Endothelial cell of umbilical vein (primary cell): ENCODE measurements at regions of chr22 and their contacts with region 1.

Region 1: DNA sequence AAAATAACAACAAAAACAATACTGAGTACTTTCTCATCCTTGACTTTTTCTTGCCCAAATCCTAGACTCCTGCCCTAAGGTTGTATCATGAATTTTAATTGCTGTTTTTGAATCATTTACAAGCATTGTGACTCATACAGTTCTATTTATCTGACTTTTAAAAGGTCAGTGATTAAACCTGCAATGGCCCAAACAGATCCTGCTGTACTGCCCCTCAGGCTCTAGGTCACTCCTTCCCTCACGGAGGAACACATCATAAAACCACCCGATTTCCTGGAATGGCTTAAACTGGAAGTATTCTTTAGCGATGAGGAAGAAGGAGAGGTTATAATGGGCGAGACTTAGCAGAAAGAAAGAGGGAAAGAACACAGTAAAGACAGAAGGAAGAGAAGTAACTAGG is 12.3 kb downstream of the ARFGAP3 start:
- DNase-seq: peak; percentile 61
- H3K4me3 ChIP-seq: no peak overlapping the region
- H3K27ac ChIP-seq: no peak overlapping the region
- H3K4me1 ChIP-seq: peaks cover 14% of the 10 kb centered on the region
- H3K27me3 ChIP-seq: no peaks in the 10 kb centered on the region
- CTCF ChIP-seq: no peak
- POLR2A ChIP-seq: no peak

Region 2: DNA sequence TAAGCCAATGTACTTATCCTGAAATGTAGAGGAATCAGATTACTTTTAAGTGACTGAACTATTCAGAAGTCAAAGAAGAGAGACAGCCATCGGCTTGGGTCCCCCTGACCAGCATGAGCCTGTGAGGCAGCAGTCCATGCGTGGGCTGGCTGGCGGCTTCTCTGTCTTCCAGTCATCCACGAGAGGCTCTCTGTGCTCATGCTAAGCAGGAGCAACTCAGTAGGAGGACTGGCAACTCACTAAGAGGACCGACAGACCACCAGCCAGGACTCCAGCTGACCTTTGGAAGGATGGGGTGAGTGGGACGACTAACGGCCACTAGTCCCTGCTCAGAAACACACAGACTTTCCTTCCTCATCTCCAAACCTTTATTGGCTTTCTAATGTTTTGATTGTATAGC is 31.3 kb before region 1 on chr22:
- CTCF ChIA-PET with region 1: no interaction called
- POLR2A ChIA-PET with region 1: no interaction called
- dilution Hi-C with region 1: no loop called
- intact Hi-C with region 1: loop called (anchors 1 kb)
- DNase-seq: no peak
- H3K4me3 ChIP-seq: no peak overlapping the region
- H3K27ac ChIP-seq: no peak overlapping the region
- H3K4me1 ChIP-seq: peaks cover 7% of the 10 kb centered on the region
- H3K27me3 ChIP-seq: no peaks in the 10 kb centered on the region
- CTCF ChIP-seq: no peak
- POLR2A ChIP-seq: no peak

Region 3: GRCh38 chr22:42820066-42820763 is 24.5 kb before region 1 on chr22:
- CTCF ChIA-PET with region 1: interaction called, 10 read pairs
- POLR2A ChIA-PET with region 1: no interaction called
- dilution Hi-C with region 1: no loop called
- intact Hi-C with region 1: no loop called
- DNase-seq: peak; percentile 63
- H3K4me3 ChIP-seq: no peak overlapping the region
- H3K27ac ChIP-seq: no peak overlapping the region
- H3K4me1 ChIP-seq: peaks cover 13% of the 10 kb centered on the region
- H3K27me3 ChIP-seq: no peaks in the 10 kb centered on the region
- CTCF ChIP-seq: peak; percentile 5 to 32
- POLR2A ChIP-seq: no peak

Region 4: DNA sequence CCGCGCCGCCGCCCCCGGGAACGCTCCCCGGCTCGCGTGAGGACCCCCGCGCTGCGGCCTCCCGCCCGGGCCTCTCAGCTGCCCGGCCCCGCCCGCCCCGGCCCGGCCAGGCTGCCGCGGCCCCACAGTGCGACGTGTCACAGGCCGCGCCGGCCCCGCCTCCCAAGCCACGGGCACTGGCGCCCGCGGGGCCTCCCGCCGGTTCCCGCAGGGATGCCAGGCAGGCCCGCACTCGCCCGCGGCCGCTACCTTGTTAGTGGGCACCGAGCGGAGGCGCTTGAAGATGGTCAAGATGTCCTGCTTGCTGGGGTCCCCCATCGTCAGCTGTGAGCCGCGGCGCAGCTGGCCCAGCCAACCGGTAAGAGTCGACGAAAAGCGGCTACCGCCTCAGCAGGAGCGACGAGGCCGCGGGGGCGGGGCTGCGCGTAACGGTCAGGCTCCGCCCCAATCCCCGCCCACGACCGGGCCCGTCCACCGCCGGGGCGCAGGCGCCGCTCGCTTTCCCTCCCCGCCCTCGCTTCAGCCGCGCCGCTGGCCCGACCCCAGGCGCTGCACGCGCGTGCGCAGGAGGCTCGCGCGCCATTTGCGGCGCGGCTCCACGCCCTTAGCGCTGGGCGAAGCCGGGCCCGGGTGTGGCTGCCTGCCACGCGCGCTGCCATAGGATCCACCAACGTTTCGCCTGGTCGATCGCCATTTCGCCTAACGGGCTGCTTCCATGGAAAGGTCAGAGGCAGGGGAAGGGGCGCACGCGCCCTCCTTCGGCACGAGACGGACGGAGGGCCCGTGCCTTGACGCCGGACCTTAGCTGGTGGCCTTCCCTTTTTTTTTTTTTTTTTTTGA is 12.3 kb after region 1 on chr22 and contains the start of gene ARFGAP3:
- CTCF ChIA-PET with region 1: interaction called, 10 read pairs
- POLR2A ChIA-PET with region 1: interaction called, 5 read pairs
- dilution Hi-C with region 1: no loop called
- intact Hi-C with region 1: no loop called
- DNase-seq: peak; percentile 94
- H3K4me3 ChIP-seq: peak within 1 kb of the TSS; percentile 61 to 81 (median 65)
- H3K27ac ChIP-seq: peak within 1 kb of the TSS; percentile 89
- H3K4me1 ChIP-seq: peaks cover 2% of the 10 kb centered on the region
- H3K27me3 ChIP-seq: no peaks in the 10 kb centered on the region
- CTCF ChIP-seq: no peak
- POLR2A ChIP-seq: peak; percentile 78
- total RNA-seq, gene ARFGAP3: 33.4 and 40.2 TPM in 2 replicates

Region 5: GRCh38 chr22:43110444-43110926 is 265.7 kb after region 1 on chr22 and contains the start of gene BIK:
- CTCF ChIA-PET with region 1: no interaction called
- POLR2A ChIA-PET with region 1: no interaction called
- dilution Hi-C with region 1: no loop called
- intact Hi-C with region 1: no loop called
- DNase-seq: peak; percentile 47
- H3K4me3 ChIP-seq: peak within 1 kb of the TSS; percentile 19 to 51 (median 50)
- H3K27ac ChIP-seq: no peak within 1 kb of the TSS
- H3K4me1 ChIP-seq: no peaks in the 10 kb centered on the region
- H3K27me3 ChIP-seq: peaks cover 16 to 26% of the 10 kb centered on the region in 2 experiments
- CTCF ChIP-seq: peak; percentile 19 to 53
- POLR2A ChIP-seq: no peak
- total RNA-seq, gene BIK: 0.49 TPM in 1 of 2 replicates, not detected in the other